ENCODE measurements at regions of chr6 and their contacts with region 1.

Region 1: GRCh38 chr6:52419809-52420670 is at the start of gene EFHC1:
- DNase-seq: peak; percentile 99
- ATAC-seq: peak; percentile 90
- H3K4me3 ChIP-seq: peak within 1 kb of the TSS; percentile 67 to 90 (median 86)
- H3K4me3 Mint-ChIP-seq: no peak within 1 kb of the TSS
- H3K27ac ChIP-seq: peak within 1 kb of the TSS; percentile 58 to 84
- H3K27ac Mint-ChIP-seq: no peak within 1 kb of the TSS
- H3K4me1 ChIP-seq: peaks cover 16 to 20% of the 10 kb centered on the region in 2 donors
- H3K4me1 Mint-ChIP-seq: peaks cover 11% of the 10 kb centered on the region
- H3K27me3 ChIP-seq: no peaks in the 10 kb centered on the region
- H3K27me3 Mint-ChIP-seq: peaks cover 1% of the 10 kb centered on the region
- CTCF ChIP-seq: no peak
- total RNA-seq, gene EFHC1: 34.8 and 45.7 TPM in 2 replicates

Region 2: DNA sequence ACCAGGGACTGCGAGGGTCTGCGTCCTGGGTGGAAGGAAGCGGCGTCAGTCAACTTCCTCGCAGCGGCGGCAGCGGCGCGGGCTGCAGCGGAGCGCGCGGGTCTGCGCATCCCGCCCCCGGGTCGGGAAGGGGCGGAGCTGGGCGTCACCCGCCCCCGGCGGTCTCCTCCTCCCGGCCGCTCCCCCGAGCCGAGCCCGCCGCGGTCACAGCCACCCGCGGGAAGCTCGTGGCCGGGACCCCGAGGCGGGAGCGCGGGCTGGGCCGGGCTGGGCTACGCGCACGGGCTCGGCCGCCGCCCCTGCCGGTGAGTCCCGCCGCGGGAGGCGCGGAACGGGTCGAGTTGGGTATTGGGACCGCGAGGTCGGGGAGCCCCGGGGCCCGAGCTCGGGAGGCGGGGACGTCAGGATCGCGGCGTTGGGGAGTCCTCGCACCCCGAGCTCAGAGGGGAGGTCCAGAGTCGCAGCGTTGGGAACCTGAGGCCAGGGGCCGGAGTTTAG is 58.0 kb before region 1 on chr6 and contains the start of gene PAQR8:
- CTCF ChIA-PET with region 1: interaction called, 6 read pairs
- POLR2A ChIA-PET with region 1: interaction called, 6 read pairs
- intact Hi-C with region 1: loop called (anchors 1 kb)
- DNase-seq: peak; percentile 88
- ATAC-seq: peak; percentile 90
- H3K4me3 ChIP-seq: peak within 1 kb of the TSS; percentile 54 to 100 (median 91)
- H3K4me3 Mint-ChIP-seq: peak within 1 kb of the TSS; percentile 96
- H3K27ac ChIP-seq: peak within 1 kb of the TSS; percentile 76 to 86
- H3K27ac Mint-ChIP-seq: peak within 1 kb of the TSS; percentile 92
- H3K4me1 ChIP-seq: peaks cover 14 to 17% of the 10 kb centered on the region in 2 donors
- H3K4me1 Mint-ChIP-seq: peaks cover 24% of the 10 kb centered on the region
- H3K27me3 ChIP-seq: no peaks in the 10 kb centered on the region
- H3K27me3 Mint-ChIP-seq: no peaks in the 10 kb centered on the region
- CTCF ChIP-seq: peak; percentile 5
- total RNA-seq, gene PAQR8: 8.5 and 8.9 TPM in 2 replicates

Region 3: DNA sequence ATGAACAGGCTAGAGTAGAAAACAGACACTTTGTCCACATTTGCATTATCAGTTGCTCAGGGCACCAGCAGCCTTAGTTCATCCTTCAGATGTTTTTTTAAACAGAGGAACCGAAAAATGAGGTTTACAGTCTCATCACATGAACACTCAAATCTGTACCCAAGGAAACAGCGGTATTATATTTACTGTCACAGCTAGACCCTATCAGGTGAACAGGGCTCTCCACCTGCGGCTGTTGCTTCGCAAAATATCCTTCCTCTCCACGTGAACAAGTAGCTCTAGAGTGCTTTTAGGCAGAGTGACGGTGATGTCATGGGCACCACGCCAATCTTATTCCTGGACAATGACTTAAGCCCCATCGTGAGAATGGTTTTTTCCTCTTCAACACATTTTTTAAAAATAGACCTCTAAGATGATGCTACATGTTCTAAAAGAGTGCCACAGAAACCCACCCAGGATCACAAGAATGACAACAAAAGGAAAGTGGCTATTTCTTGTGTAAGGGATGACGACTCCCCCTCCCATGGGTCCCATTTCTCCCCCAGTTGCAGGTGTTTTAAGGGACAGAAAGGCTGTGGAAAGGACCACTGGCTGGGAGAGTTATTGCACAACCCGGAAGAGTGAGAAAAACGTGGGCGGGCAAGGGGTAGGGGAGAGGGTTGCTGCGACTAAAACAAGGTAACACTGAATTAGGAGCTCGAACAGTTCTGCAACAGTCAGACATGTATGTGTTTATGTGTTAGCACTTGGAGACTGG is 77.8 kb after region 1 on chr6:
- CTCF ChIA-PET with region 1: interaction called, 38 read pairs
- POLR2A ChIA-PET with region 1: interaction called, 5 read pairs
- intact Hi-C with region 1: loop called (anchors 1 kb)
- DNase-seq: peak; percentile 89
- ATAC-seq: peak; percentile 79
- H3K4me3 ChIP-seq: peak overlapping the region in 3 of 5 experiments; percentile 3 to 19 (median 7)
- H3K4me3 Mint-ChIP-seq: peak overlapping the region; percentile 76
- H3K27ac ChIP-seq: peak overlapping the region; percentile 96 to 99
- H3K27ac Mint-ChIP-seq: peak overlapping the region; percentile 96
- H3K4me1 ChIP-seq: peaks cover 43 to 61% of the 10 kb centered on the region in 2 donors
- H3K4me1 Mint-ChIP-seq: peaks cover 66% of the 10 kb centered on the region
- H3K27me3 ChIP-seq: no peaks in the 10 kb centered on the region
- H3K27me3 Mint-ChIP-seq: no peaks in the 10 kb centered on the region
- CTCF ChIP-seq: no peak

Region 4: GRCh38 chr6:52577022-52577777 is 157.2 kb after region 1 on chr6 and contains the start of gene TRAM2:
- CTCF ChIA-PET with region 1: interaction called, 32 read pairs
- POLR2A ChIA-PET with region 1: interaction called, 4 read pairs
- intact Hi-C with region 1: loop called (anchors 1 kb)
- DNase-seq: peak; percentile 89
- ATAC-seq: peak; percentile 79
- H3K4me3 ChIP-seq: peak within 1 kb of the TSS; percentile 63 to 88 (median 79)
- H3K4me3 Mint-ChIP-seq: peak within 1 kb of the TSS; percentile 94
- H3K27ac ChIP-seq: peak within 1 kb of the TSS; percentile 66 to 92
- H3K27ac Mint-ChIP-seq: peak within 1 kb of the TSS; percentile 83
- H3K4me1 ChIP-seq: peaks cover 32 to 35% of the 10 kb centered on the region in 2 donors
- H3K4me1 Mint-ChIP-seq: peaks cover 46% of the 10 kb centered on the region
- H3K27me3 ChIP-seq: no peaks in the 10 kb centered on the region
- H3K27me3 Mint-ChIP-seq: no peaks in the 10 kb centered on the region
- CTCF ChIP-seq: no peak
- total RNA-seq, gene TRAM2: 13.3 and 14.0 TPM in 2 replicates

Region 5: DNA sequence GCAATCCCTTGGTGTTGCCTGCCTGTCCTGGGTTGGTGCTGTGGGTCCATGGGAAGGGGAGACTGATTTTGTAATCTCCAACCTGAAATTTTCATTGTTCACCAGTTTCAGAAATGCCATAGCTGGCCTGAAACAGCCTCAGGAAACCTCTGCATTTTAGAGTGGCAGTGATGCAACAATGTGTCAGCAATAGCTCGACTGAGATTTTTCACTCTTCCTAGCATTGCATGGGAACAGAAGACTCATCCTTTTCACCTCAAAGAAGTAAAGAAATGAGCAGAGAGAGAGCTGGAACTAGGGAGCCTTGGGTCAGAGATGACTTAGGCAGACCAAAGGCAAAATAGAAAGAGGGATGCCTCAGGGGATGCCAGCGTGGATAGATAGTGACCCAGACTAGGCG is 227.2 kb after region 1 on chr6:
- CTCF ChIA-PET with region 1: interaction called, 12 read pairs
- POLR2A ChIA-PET with region 1: no interaction called
- intact Hi-C with region 1: no loop called
- DNase-seq: no peak
- ATAC-seq: no peak
- H3K4me3 ChIP-seq: no peak overlapping the region
- H3K4me3 Mint-ChIP-seq: no peak overlapping the region
- H3K27ac ChIP-seq: no peak overlapping the region
- H3K27ac Mint-ChIP-seq: no peak overlapping the region
- H3K4me1 ChIP-seq: no peaks in the 10 kb centered on the region
- H3K4me1 Mint-ChIP-seq: peaks cover 4% of the 10 kb centered on the region
- H3K27me3 ChIP-seq: no peaks in the 10 kb centered on the region
- H3K27me3 Mint-ChIP-seq: peaks cover 13% of the 10 kb centered on the region
- CTCF ChIP-seq: no peak